ENCODE measurements at regions of chr1 and their contacts with region 1.

Region 1: DNA sequence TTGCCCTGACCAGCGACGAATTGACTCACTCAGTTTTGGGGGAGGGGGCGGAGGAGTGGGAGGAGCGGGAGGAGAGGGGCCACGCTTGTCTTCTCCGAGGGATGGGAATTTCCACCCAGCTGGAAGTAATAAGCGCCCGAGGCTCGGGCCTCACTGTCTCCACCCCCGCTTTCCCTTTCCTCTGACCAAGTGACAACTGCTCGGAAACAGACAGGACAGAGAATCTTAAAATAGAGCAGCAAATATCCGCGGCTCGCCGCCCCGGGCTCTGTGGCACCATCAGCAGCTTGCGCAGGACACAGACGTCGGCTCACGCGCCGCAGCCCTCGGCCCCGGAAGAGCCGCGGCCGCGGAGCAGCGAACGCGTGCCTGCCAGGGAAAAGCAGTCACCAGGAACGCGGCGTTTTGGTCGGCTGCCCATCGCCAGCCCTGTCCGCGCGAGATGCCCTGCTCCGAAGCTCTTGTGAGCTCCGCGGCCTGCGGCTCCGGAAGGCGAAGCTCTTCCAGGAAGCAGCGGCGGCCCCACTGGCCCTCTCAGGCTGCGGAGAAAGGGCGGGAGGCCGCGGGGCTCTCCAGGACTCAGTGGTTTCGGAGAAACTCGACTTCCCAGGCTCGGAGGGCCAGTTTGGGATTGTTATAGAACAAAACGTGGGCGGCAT is 10.7 kb upstream of the RGS16 start:
- DNase-seq: peak in 11 of 14 experiments; percentile 17 to 78 (median 43)
- ATAC-seq: no peak
- H3K4me3 ChIP-seq: peak overlapping the region; percentile 57
- H3K4me3 Mint-ChIP-seq: peak overlapping the region; percentile 84
- H3K27ac ChIP-seq: no peak overlapping the region
- H3K27ac Mint-ChIP-seq: peak overlapping the region; percentile 82
- H3K4me1 ChIP-seq: peaks cover 36% of the 10 kb centered on the region
- H3K4me1 Mint-ChIP-seq: peaks cover 32% of the 10 kb centered on the region
- H3K27me3 ChIP-seq: peaks cover 14 to 23% of the 10 kb centered on the region in 2 experiments
- H3K27me3 Mint-ChIP-seq: peaks cover 49% of the 10 kb centered on the region
- CTCF ChIP-seq: no peak

Region 2: DNA sequence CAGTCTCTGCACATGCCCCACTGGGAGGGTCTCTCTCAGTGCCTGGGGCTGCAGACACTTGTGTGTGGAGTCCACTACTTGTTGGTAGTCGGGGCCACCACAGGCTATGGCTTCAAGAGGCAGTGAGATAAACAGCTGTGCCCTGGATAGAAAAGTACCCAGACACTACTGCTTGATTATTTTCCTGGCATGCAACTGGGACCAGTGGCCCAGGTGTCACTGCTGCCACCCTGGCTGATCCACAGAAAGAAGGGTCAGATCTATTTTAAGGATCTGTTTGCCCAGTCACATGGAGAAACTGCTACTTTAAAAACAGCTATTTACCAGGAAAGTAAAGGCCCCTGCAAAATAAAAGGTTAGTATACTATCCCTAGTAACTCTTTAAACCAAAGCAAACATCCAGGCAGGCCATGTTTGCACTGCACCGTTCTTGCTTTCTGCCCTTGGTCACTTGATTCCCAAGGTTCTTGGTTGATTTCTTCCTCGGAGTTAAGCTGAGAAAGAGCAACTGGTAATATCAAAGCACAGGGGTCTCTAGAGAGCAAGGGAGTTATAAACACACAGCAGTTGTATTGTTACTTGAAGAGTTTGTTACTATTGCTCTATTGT is 323.2 kb before region 1 on chr1:
- CTCF ChIA-PET with region 1: no interaction called
- POLR2A ChIA-PET with region 1: no interaction called
- intact Hi-C with region 1: no loop called
- DNase-seq: no peak
- ATAC-seq: no peak
- H3K4me3 ChIP-seq: no peak overlapping the region
- H3K4me3 Mint-ChIP-seq: no peak overlapping the region
- H3K27ac ChIP-seq: no peak overlapping the region
- H3K27ac Mint-ChIP-seq: no peak overlapping the region
- H3K4me1 ChIP-seq: no peaks in the 10 kb centered on the region
- H3K4me1 Mint-ChIP-seq: peaks cover 4% of the 10 kb centered on the region
- H3K27me3 ChIP-seq: no peaks in the 10 kb centered on the region
- H3K27me3 Mint-ChIP-seq: no peaks in the 10 kb centered on the region
- CTCF ChIP-seq: no peak

Region 3: DNA sequence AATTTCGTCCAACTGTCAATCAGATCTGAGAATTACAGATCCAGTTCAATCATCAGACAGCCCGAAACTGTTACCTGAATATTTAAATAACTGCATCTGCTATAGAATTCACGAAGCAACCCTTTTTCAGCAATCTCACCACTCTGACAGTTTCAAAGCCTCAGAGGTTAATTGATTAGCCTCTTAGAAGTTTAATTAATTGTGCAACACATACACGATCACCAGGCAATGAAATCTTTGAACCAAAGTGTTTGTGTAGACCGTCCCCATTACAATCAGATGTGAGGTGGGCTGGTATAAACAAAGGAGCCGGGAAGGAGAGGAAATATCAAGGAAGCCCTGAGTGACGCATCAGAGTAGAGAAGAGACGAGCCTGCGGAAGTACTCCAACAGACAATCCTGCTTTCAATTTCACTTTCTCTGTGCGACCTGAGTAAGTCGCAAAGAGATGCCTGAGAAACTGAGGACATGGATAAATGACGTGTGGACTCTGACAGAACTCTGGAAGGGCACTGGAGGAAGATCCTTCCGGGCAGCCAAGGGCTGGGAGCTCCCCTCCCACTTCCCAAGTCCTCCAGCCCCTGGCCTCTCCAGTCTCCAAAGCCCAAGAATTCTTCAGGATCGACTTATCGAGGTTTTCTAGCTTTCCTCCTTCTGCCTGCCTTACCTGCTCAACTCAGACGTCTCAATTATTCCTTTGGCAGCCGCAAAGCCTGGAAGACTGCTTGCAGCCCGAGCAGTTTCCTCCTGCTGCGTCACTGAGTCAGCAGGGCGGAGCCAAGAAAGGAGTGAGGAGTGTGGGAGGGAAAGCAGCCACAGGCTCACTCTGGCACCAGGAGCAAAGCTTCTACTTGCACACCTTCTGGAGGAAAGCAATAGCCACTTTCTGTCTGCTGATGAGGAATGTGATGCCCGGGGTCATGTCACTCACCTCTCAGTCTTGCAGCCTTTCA is 26.1 kb before region 1 on chr1 and contains the start of gene RNASEL:
- CTCF ChIA-PET with region 1: no interaction called
- POLR2A ChIA-PET with region 1: interaction called, 32 read pairs
- intact Hi-C with region 1: no loop called
- DNase-seq: peak; percentile 28 to 85 (median 54)
- ATAC-seq: peak; percentile 85
- H3K4me3 ChIP-seq: peak within 1 kb of the TSS; percentile 83
- H3K4me3 Mint-ChIP-seq: peak within 1 kb of the TSS; percentile 95
- H3K27ac ChIP-seq: peak within 1 kb of the TSS; percentile 89 to 97
- H3K27ac Mint-ChIP-seq: peak within 1 kb of the TSS; percentile 99
- H3K4me1 ChIP-seq: peaks cover 28% of the 10 kb centered on the region
- H3K4me1 Mint-ChIP-seq: peaks cover 52% of the 10 kb centered on the region
- H3K27me3 ChIP-seq: no peaks in the 10 kb centered on the region
- H3K27me3 Mint-ChIP-seq: no peaks in the 10 kb centered on the region
- CTCF ChIP-seq: no peak
- total RNA-seq, gene RNASEL: 3.5 to 3.7 TPM

Measured in CD4-positive, alpha-beta T cell (primary cell).